Esophagus muscularis mucosa (tissue), 4 donors: ENCODE measurements at regions of chr13 and their contacts with region 1.

Region 1: GRCh38 chr13:52128714-52129700 is at the start of gene NEK5:
- DNase-seq: no peak
- H3K4me3 ChIP-seq: peak within 1 kb of the TSS; percentile 63 to 80 (median 69)
- H3K27ac ChIP-seq: peak within 1 kb of the TSS; percentile 22 to 50 (median 44)
- H3K4me1 ChIP-seq: peaks cover 13 to 28% (median 24%) of the 10 kb centered on the region in 4 donors
- H3K27me3 ChIP-seq: no peaks in the 10 kb centered on the region
- CTCF ChIP-seq: peak; percentile 70 to 83 (median 75)
- EP300 ChIP-seq: no peak
- POLR2A ChIP-seq: no peak
- total RNA-seq, gene NEK5: 0.17 to 0.34 (median 0.26) TPM in 3 of 4 donors, not detected in the other

Region 2: GRCh38 chr13:51814825-51815650 is 314.0 kb before region 1 on chr13:
- intact Hi-C with region 1: loop called (anchors 5 kb)
- DNase-seq: no peak
- H3K4me3 ChIP-seq: peak overlapping the region; percentile 23 to 44 (median 30)
- H3K27ac ChIP-seq: no peak overlapping the region
- H3K4me1 ChIP-seq: peaks cover 19 to 23% (median 20%) of the 10 kb centered on the region in 4 donors
- H3K27me3 ChIP-seq: no peaks in the 10 kb centered on the region
- CTCF ChIP-seq: peak; percentile 80 to 88 (median 81)
- EP300 ChIP-seq: no peak
- POLR2A ChIP-seq: no peak

Region 3: DNA sequence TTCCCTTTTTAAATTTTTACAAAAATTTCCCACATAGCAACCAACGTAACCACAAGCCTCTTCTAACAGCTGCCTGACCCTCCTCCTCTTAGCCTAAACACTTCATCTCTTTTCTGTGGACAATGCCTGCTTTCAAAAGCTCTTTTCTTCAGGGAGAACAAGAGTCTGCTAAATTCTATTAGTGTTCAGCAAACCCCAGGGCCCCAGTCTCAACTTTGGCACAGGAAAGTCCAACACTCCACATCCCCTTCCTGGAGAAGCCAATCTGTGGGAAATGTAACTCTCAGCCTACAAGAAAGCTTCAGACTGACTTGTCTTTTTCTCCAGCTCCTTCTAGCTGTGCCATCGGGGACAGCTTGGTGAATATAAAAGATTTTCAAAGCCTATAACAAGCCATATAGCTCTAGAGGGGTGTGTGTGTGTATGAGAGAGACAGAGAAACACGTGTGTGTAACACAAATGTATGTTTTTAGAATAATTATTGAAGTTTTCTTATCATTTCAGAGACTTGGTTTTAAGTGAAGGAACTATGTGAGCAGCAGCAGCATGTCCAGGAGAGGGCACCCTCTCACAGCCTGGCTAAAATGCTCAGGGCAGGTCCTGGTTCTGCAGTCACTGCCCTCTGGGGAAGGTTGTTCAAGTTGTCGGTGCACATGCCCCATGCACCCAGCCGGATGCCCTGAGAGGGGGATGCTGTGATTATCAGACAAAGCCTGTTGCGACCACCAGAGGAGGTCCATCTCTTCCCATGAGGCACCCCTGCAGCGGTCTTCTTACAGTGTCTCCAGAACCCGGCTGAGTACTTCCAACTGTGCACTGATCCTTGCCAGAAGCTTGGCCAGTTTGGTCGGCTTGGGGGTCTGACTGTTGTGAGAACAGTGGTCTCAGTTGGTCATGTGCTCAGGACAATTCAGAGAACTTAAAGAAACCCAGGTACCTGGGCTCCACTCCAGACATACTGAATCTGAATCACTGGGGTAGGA is 232.8 kb before region 1 on chr13:
- intact Hi-C with region 1: loop called (anchors 2 kb)
- DNase-seq: no peak
- H3K4me3 ChIP-seq: no peak overlapping the region
- H3K27ac ChIP-seq: no peak overlapping the region
- H3K4me1 ChIP-seq: no peaks in the 10 kb centered on the region
- H3K27me3 ChIP-seq: no peaks in the 10 kb centered on the region
- CTCF ChIP-seq: peak; percentile 55 to 62 (median 56)
- EP300 ChIP-seq: no peak
- POLR2A ChIP-seq: no peak

Region 4: GRCh38 chr13:51935326-51936201 is 193.4 kb before region 1 on chr13:
- intact Hi-C with region 1: loop called (anchors 5 kb)
- DNase-seq: no peak
- H3K4me3 ChIP-seq: no peak overlapping the region
- H3K27ac ChIP-seq: no peak overlapping the region
- H3K4me1 ChIP-seq: no peaks in the 10 kb centered on the region
- H3K27me3 ChIP-seq: no peaks in the 10 kb centered on the region
- CTCF ChIP-seq: peak; percentile 7 to 35 (median 19)
- EP300 ChIP-seq: no peak
- POLR2A ChIP-seq: no peak

Region 5: GRCh38 chr13:52001120-52001731 is 127.8 kb before region 1 on chr13:
- intact Hi-C with region 1: loop called (anchors 5 kb)
- DNase-seq: no peak
- H3K4me3 ChIP-seq: no peak overlapping the region
- H3K27ac ChIP-seq: no peak overlapping the region
- H3K4me1 ChIP-seq: peaks cover 15 to 31% (median 29%) of the 10 kb centered on the region in 4 donors
- H3K27me3 ChIP-seq: no peaks in the 10 kb centered on the region
- CTCF ChIP-seq: peak; percentile 55 to 81 (median 57)
- EP300 ChIP-seq: no peak
- POLR2A ChIP-seq: no peak

Region 6: GRCh38 chr13:52450012-52450792 is 321.2 kb after region 1 on chr13 and contains the start of gene VPS36:
- intact Hi-C with region 1: loop called (anchors 5 kb)
- DNase-seq: peak; percentile 98
- H3K4me3 ChIP-seq: peak within 1 kb of the TSS; percentile 81 to 97 (median 91)
- H3K27ac ChIP-seq: peak within 1 kb of the TSS; percentile 89 to 95 (median 94)
- H3K4me1 ChIP-seq: peaks cover 28 to 42% (median 38%) of the 10 kb centered on the region in 4 donors
- H3K27me3 ChIP-seq: no peaks in the 10 kb centered on the region
- CTCF ChIP-seq: peak in 2 of 3 experiments; percentile 99
- EP300 ChIP-seq: no peak
- POLR2A ChIP-seq: peak; percentile 89
- total RNA-seq, gene VPS36: 29.5 to 34.0 (median 33.1) TPM

Region 7: GRCh38 chr13:53068585-53069520 is 939.8 kb after region 1 on chr13:
- intact Hi-C with region 1: no loop called
- DNase-seq: peak; percentile 77
- H3K4me3 ChIP-seq: no peak overlapping the region
- H3K27ac ChIP-seq: no peak overlapping the region
- H3K4me1 ChIP-seq: no peaks in the 10 kb centered on the region
- H3K27me3 ChIP-seq: peaks cover 0 to 13% (median 0%) of the 10 kb centered on the region in 4 donors
- CTCF ChIP-seq: no peak
- EP300 ChIP-seq: no peak
- POLR2A ChIP-seq: no peak